CD8-positive, alpha-beta T cell (primary cell): ENCODE measurements at regions of chr5 and their contacts with region 1.

Region 1: DNA sequence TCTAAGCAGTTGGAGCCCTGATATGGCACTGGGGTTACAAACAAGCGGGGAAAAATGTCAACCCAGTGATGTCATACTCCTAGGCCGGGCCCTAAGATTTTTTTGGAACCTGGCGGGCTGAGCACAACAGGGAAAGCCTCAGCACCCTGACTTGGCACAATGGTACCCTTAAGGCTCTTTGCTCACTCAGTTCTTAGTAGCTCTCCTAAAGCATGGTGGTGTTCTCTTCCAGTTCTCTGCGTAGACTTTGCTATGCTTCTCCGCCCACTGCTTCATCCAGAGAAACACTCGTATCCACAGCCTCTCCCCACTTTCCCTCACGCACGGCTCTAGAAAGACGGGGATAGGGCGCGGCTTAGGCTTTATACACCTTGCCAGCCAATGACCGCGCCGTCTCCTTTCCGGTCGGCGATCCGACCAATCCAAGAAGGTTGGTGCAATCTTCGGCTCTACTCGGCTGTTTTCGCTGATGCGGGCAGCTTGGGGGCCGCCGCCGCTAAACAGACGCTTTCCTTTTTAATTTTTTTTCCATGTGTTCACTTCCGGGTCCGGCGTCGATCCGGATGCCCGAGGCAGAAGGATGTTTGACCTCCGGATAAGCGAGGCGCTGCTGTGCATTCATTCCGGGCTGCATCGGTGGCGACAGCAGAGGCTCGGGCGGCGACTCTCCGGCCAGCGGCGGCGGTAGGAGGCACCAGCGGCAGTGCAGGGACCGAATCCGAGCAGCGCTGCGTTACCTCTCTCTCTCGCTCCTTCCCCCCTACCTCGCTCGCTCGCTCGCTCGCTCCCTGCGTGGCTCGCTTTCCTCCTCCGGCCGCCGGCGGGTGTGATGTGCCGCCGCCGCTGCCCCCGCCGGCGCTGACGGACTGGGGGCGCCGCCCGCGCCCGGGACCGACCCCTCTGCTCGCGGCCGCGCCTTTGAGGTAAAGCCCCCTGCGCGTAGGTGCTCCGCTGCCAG is at the start of gene CSNK1G3:
- DNase-seq: peak; percentile 80 to 96 (median 91)
- ATAC-seq: peak; percentile 80
- H3K4me3 ChIP-seq: peak within 1 kb of the TSS; percentile 89 to 93
- H3K4me3 Mint-ChIP-seq: peak within 1 kb of the TSS; percentile 99
- H3K27ac ChIP-seq: peak within 1 kb of the TSS; percentile 77 to 87
- H3K27ac Mint-ChIP-seq: peak within 1 kb of the TSS; percentile 98
- H3K4me1 ChIP-seq: peaks cover 33% of the 10 kb centered on the region
- H3K4me1 Mint-ChIP-seq: peaks cover 42% of the 10 kb centered on the region
- H3K27me3 ChIP-seq: no peaks in the 10 kb centered on the region
- H3K27me3 Mint-ChIP-seq: peaks cover 2% of the 10 kb centered on the region
- CTCF ChIP-seq: no peak
- total RNA-seq, gene CSNK1G3: 98.1 to 99.9 TPM

Region 2: DNA sequence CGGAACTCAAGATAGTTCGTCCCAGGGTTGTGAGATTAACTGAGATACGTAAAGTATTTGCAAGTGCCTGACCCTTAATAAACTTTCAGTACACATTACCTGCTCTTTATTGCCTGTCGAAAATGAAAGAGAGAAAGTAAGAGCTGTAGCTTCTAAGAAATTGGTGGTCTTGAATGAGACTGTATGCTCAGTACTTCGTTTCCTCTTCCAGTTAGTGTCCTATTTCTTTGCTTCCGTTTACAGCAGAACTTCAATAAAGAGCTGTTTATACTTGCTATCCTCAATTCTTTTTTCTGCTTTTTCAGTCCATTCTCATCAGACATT is 1549.6 kb before region 1 on chr5:
- CTCF ChIA-PET with region 1: no interaction called
- POLR2A ChIA-PET with region 1: no interaction called
- intact Hi-C with region 1: loop called (anchors 2 to 10 kb)
- DNase-seq: no peak
- ATAC-seq: no peak
- H3K4me3 ChIP-seq: peak overlapping the region; percentile 87
- H3K4me3 Mint-ChIP-seq: peak overlapping the region; percentile 96
- H3K27ac ChIP-seq: peak overlapping the region; percentile 74 to 79
- H3K27ac Mint-ChIP-seq: peak overlapping the region; percentile 94
- H3K4me1 ChIP-seq: peaks cover 12% of the 10 kb centered on the region
- H3K4me1 Mint-ChIP-seq: peaks cover 44% of the 10 kb centered on the region
- H3K27me3 ChIP-seq: no peaks in the 10 kb centered on the region
- H3K27me3 Mint-ChIP-seq: peaks cover 10% of the 10 kb centered on the region
- CTCF ChIP-seq: no peak

Region 3: DNA sequence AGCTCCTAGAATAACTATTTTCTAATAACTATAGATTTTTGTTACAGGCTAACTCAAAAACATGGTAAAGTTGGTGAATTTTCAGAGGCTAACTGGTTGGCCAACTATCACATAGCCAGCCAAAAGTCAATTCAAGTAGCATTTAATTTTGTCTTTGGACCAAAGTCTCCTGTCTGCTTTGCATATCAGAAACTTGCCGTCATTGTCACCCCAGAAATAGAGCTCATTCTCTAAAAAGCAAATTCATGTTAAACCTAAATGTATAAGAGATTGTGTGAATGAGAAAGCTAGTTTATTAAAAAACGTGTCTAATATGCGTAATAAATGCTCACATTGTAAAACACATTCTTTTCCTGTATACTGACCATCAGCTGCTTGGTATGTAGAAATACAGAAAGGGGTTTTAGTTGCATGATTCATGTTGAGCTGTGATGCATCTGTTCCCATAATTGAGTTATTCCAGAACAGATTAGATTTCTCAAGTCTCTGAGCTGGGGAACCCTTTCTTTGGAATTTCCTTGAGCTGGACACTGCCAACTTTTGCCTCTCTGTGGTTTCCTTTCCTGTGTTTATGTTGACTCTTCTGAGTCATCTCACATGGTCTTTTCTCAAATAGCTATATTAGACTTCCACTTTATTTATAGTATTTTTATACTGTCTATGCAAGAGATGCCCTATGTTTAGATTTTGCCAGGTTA is 1542.9 kb before region 1 on chr5:
- CTCF ChIA-PET with region 1: no interaction called
- POLR2A ChIA-PET with region 1: no interaction called
- intact Hi-C with region 1: loop called in 1 of 2 experiments (anchors 10 kb)
- DNase-seq: no peak
- ATAC-seq: no peak
- H3K4me3 ChIP-seq: no peak overlapping the region
- H3K4me3 Mint-ChIP-seq: no peak overlapping the region
- H3K27ac ChIP-seq: no peak overlapping the region
- H3K27ac Mint-ChIP-seq: no peak overlapping the region
- H3K4me1 ChIP-seq: no peaks in the 10 kb centered on the region
- H3K4me1 Mint-ChIP-seq: peaks cover 43% of the 10 kb centered on the region
- H3K27me3 ChIP-seq: no peaks in the 10 kb centered on the region
- H3K27me3 Mint-ChIP-seq: no peaks in the 10 kb centered on the region
- CTCF ChIP-seq: no peak

Region 4: DNA sequence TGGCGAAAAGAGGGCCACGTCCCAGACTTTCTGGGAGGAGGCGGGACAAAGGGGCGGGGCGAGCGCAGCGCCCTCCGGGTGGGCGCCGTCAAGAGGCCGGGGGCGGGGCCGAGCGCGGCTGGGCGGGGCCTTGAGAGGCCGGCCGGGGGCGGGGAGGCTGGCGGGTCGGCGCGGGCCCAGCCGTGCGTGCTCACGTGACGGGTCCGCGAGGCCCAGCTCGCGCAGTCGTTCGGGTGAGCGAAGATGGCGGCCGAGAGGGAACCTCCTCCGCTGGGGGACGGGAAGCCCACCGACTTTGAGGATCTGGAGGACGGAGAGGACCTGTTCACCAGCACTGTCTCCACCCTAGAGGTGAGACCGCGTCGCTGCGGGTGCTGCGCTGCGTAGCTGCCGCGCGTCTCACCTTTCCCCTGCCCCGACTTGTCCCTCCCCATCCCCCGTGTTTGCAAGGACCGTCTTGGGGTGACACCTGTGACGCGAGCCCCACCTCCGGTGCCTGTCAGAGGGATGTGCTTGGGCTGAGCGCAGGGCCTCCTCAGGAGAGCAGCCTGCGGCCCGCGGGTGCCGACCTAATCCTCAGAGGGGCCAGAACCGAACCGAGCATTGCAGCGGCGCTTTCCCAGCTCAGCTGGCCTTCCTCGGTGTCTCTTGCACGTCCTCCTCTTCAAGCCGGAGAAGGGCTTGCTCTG is 736.9 kb before region 1 on chr5 and contains the start of gene SNX2:
- CTCF ChIA-PET with region 1: no interaction called
- POLR2A ChIA-PET with region 1: no interaction called
- intact Hi-C with region 1: loop called (anchors 2 to 10 kb)
- DNase-seq: peak; percentile 77 to 94 (median 89)
- ATAC-seq: peak; percentile 85
- H3K4me3 ChIP-seq: peak within 1 kb of the TSS; percentile 72 to 89
- H3K4me3 Mint-ChIP-seq: peak within 1 kb of the TSS; percentile 93
- H3K27ac ChIP-seq: peak within 1 kb of the TSS; percentile 83 to 87
- H3K27ac Mint-ChIP-seq: peak within 1 kb of the TSS; percentile 95
- H3K4me1 ChIP-seq: peaks cover 34% of the 10 kb centered on the region
- H3K4me1 Mint-ChIP-seq: peaks cover 51% of the 10 kb centered on the region
- H3K27me3 ChIP-seq: no peaks in the 10 kb centered on the region
- H3K27me3 Mint-ChIP-seq: peaks cover 4% of the 10 kb centered on the region
- CTCF ChIP-seq: peak; percentile 44
- total RNA-seq, gene SNX2: 68.6 to 76.3 TPM

Region 5: DNA sequence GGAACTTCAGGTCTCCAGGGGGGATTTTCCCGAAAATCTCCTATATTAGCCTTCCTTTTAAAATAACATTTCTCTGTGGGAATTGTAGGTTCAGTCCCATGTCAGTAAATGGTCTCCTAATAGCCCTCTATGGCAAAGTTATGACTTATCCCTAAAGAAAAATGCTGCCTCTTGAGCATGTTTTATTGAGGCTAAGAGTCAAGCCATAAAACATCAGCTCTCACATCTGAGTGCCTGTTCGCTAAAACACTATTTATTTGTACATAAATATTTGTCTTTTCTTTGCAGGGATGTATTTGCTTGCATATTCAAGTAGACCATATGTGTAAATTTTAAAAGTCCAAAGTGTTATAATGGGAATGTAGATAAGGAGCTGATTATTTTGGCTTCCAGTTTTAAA is 262.5 kb before region 1 on chr5:
- CTCF ChIA-PET with region 1: no interaction called
- POLR2A ChIA-PET with region 1: no interaction called
- intact Hi-C with region 1: no loop called
- DNase-seq: no peak
- ATAC-seq: no peak
- H3K4me3 ChIP-seq: no peak overlapping the region
- H3K4me3 Mint-ChIP-seq: no peak overlapping the region
- H3K27ac ChIP-seq: no peak overlapping the region
- H3K27ac Mint-ChIP-seq: no peak overlapping the region
- H3K4me1 ChIP-seq: no peaks in the 10 kb centered on the region
- H3K4me1 Mint-ChIP-seq: no peaks in the 10 kb centered on the region
- H3K27me3 ChIP-seq: no peaks in the 10 kb centered on the region
- H3K27me3 Mint-ChIP-seq: peaks cover 3% of the 10 kb centered on the region
- CTCF ChIP-seq: no peak

Region 6: DNA sequence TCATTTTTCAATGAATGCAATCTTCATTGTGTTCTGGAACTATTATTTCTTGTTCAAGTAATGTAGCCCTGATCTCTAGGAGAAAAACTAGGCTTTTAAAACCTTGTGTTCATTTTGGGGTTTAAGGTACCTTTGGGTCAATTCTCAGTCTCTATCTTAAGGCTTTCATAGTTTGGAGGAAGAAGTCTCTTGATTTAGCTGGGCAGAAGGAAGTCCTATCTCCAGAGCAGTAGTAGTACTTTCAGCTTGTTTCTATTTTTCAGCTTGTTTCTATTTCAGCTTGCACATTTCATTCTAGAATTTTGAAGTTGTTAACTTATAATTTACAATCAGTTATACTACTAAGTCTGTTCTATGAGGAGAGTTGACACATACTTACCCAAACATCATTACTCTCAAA is 15.3 kb after region 1 on chr5:
- CTCF ChIA-PET with region 1: no interaction called
- POLR2A ChIA-PET with region 1: no interaction called
- intact Hi-C with region 1: loop called in 1 of 2 experiments (anchors 1 kb)
- DNase-seq: no peak
- ATAC-seq: no peak
- H3K4me3 ChIP-seq: no peak overlapping the region
- H3K4me3 Mint-ChIP-seq: no peak overlapping the region
- H3K27ac ChIP-seq: no peak overlapping the region
- H3K27ac Mint-ChIP-seq: no peak overlapping the region
- H3K4me1 ChIP-seq: peaks cover 11% of the 10 kb centered on the region
- H3K4me1 Mint-ChIP-seq: peaks cover 67% of the 10 kb centered on the region
- H3K27me3 ChIP-seq: no peaks in the 10 kb centered on the region
- H3K27me3 Mint-ChIP-seq: no peaks in the 10 kb centered on the region
- CTCF ChIP-seq: no peak

Region 7: DNA sequence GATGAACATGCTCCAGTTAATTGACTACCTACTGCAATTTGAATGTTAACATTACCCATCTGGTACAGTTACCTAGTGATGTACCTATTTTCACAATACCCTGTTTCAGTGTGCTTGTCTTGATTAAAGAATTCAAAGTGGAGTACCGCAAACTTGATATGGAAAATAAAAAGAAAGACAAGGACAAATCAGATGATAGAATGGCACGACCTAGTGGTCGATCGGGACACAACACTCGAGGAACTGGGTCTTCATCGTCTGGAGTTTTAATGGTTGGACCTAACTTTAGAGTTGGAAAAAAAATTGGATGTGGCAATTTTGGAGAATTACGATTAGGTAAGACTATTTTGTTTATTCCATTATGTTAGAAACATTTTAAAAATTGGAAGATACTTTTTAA is 33.6 kb after region 1 on chr5:
- CTCF ChIA-PET with region 1: no interaction called
- POLR2A ChIA-PET with region 1: interaction called, 5 read pairs
- intact Hi-C with region 1: loop called (anchors 1 to 2 kb)
- DNase-seq: peak in 4 of 9 experiments; percentile 25 to 61 (median 34)
- ATAC-seq: no peak
- H3K4me3 ChIP-seq: no peak overlapping the region
- H3K4me3 Mint-ChIP-seq: no peak overlapping the region
- H3K27ac ChIP-seq: no peak overlapping the region
- H3K27ac Mint-ChIP-seq: no peak overlapping the region
- H3K4me1 ChIP-seq: peaks cover 22% of the 10 kb centered on the region
- H3K4me1 Mint-ChIP-seq: peaks cover 61% of the 10 kb centered on the region
- H3K27me3 ChIP-seq: no peaks in the 10 kb centered on the region
- H3K27me3 Mint-ChIP-seq: no peaks in the 10 kb centered on the region
- CTCF ChIP-seq: peak; percentile 54

Region 8: GRCh38 chr5:123610665-123611405 is 98.9 kb after region 1 on chr5:
- CTCF ChIA-PET with region 1: interaction called, 3 read pairs
- POLR2A ChIA-PET with region 1: no interaction called
- intact Hi-C with region 1: loop called in 1 of 2 experiments (anchors 2 kb)
- DNase-seq: peak in 3 of 9 experiments; percentile 28 to 77 (median 70)
- ATAC-seq: peak; percentile 76
- H3K4me3 ChIP-seq: no peak overlapping the region
- H3K4me3 Mint-ChIP-seq: no peak overlapping the region
- H3K27ac ChIP-seq: no peak overlapping the region
- H3K27ac Mint-ChIP-seq: peak overlapping the region; percentile 87
- H3K4me1 ChIP-seq: no peaks in the 10 kb centered on the region
- H3K4me1 Mint-ChIP-seq: peaks cover 3% of the 10 kb centered on the region
- H3K27me3 ChIP-seq: no peaks in the 10 kb centered on the region
- H3K27me3 Mint-ChIP-seq: no peaks in the 10 kb centered on the region
- CTCF ChIP-seq: peak; percentile 99